T-cell (primary cell): ENCODE measurements at regions of chr2 and their contacts with region 1.

Region 1: DNA sequence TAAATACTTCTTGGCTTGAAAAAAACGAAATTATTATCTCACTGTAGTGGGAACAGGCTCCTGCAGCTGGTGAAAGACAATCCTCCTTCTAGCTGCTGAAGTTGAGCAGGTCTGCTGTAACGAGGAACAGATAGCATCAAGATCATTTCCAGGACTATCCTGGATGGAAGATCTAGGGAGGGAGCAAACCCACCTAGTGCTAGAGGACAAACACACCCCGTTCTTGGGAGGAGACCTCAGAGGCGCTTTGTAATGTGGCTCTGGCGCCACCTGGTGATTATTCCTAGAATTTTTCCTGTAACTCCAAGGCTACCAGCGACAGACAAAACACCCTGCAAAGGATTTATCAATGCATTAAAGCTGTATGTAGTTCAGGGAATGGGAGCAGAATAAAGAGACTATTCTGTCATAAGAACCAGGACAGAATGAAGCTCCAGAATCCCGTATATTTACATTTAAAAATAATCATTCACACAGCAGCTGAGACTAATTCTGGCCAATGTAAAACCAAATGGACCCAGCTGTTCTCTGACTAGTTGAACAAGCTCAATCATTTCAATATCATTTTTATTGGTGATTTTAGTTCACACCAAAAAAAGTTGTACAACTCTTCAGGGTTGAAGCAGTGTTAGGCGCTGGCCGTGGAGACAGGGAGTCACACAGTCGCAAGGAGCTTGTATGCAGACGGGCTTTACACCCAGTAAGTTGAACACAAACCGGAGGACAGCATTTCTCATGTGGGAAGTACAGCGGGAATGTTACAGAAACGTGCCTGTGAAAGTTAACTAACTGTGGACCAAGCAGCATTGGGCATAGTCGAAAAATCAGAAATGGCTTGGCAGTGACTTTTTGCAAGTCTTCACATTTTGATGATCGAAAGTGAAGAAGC is 290.3 kb downstream of the TRIB2 start:
- DNase-seq: peak; percentile 14 to 81 (median 48)
- ATAC-seq: peak; percentile 65 to 77 (median 73)
- H3K4me3 ChIP-seq: no peak overlapping the region
- H3K4me3 Mint-ChIP-seq: no peak overlapping the region
- H3K27ac ChIP-seq: no peak overlapping the region
- H3K27ac Mint-ChIP-seq: no peak overlapping the region
- H3K4me1 ChIP-seq: peaks cover 0 to 4% of the 10 kb centered on the region in 2 experiments
- H3K4me1 Mint-ChIP-seq: peaks cover 3 to 5% (median 3%) of the 10 kb centered on the region in 3 donors
- H3K27me3 ChIP-seq: peaks cover 0 to 4% of the 10 kb centered on the region in 2 experiments
- H3K27me3 Mint-ChIP-seq: peaks cover 7 to 15% of the 10 kb centered on the region in 2 donors

Region 2: GRCh38 chr2:11829947-11830707 is 1176.9 kb before region 1 on chr2:
- CTCF ChIA-PET with region 1: interaction called, 8 to 20 read pairs
- POLR2A ChIA-PET with region 1: no interaction called
- DNase-seq: peak in 33 of 35 experiments; percentile 4 to 71 (median 25)
- ATAC-seq: peak; percentile 74 to 88 (median 84)
- H3K4me3 ChIP-seq: peak overlapping the region; percentile 7 to 27
- H3K4me3 Mint-ChIP-seq: peak overlapping the region; percentile 74 to 80 (median 76)
- H3K27ac ChIP-seq: no peak overlapping the region
- H3K27ac Mint-ChIP-seq: peak overlapping the region; percentile 84 to 85
- H3K4me1 ChIP-seq: peaks cover 14 to 29% of the 10 kb centered on the region in 2 experiments
- H3K4me1 Mint-ChIP-seq: peaks cover 39 to 57% (median 47%) of the 10 kb centered on the region in 3 donors
- H3K27me3 ChIP-seq: peaks cover 0 to 6% of the 10 kb centered on the region in 2 experiments
- H3K27me3 Mint-ChIP-seq: no peaks in the 10 kb centered on the region

Region 3: DNA sequence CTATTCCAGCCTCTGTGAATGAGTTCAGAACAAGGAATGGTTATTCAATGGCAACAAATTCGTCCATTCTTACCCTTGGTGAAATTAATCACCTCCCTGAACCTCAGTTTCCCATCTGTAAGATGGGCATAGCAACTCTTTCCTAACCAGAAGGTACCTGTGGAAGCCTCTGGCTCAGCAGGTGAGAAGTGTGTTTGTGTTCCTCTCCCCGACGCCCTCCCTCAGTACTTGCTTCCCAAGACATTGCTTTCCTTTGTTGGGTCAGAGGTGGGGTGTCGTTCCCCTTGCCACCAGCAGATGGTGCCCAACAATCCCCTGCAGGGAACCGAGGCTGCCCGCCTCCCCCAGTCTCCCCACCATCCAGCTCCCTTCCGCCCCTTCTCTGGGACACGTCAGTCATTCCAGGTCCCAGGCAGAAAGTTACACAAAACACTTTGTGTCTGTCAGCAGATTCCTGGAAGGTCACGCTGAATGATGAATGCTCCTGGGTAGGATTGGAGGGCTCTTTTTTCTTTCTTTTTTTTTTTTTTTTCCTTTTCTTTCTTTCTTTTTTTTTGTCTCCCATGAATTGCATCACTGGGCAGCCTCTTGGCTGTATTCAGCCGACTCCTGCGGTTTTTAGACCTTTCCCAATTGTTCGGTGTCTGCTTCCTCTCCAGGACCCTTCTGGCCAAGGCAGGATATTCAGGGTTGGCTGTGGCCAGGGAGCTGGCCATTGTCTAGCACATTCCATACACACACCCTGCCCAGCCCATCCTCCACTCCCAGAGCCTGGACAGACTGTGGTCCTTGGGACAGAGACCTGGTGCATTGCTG is 1143.4 kb before region 1 on chr2:
- CTCF ChIA-PET with region 1: interaction called, 6 to 11 read pairs
- POLR2A ChIA-PET with region 1: no interaction called
- DNase-seq: peak; percentile 34 to 82 (median 57)
- ATAC-seq: peak; percentile 73 to 87 (median 82)
- H3K4me3 ChIP-seq: peak overlapping the region in 1 of 2 donors; percentile 18
- H3K4me3 Mint-ChIP-seq: peak overlapping the region in 2 of 3 donors; percentile 29 to 52
- H3K27ac ChIP-seq: no peak overlapping the region
- H3K27ac Mint-ChIP-seq: peak overlapping the region in 1 of 2 donors; percentile 19
- H3K4me1 ChIP-seq: peaks cover 0 to 17% of the 10 kb centered on the region in 2 experiments
- H3K4me1 Mint-ChIP-seq: peaks cover 14 to 36% (median 21%) of the 10 kb centered on the region in 3 donors
- H3K27me3 ChIP-seq: peaks cover 0 to 3% of the 10 kb centered on the region in 2 experiments
- H3K27me3 Mint-ChIP-seq: no peaks in the 10 kb centered on the region

Region 4: GRCh38 chr2:12716282-12717190 is 290.5 kb before region 1 on chr2 and contains the start of gene TRIB2:
- CTCF ChIA-PET with region 1: interaction called in 1 of 2 experiments, 11 read pairs
- POLR2A ChIA-PET with region 1: no interaction called
- DNase-seq: peak; percentile 84 to 95 (median 91)
- ATAC-seq: peak; percentile 82 to 87 (median 84)
- H3K4me3 ChIP-seq: peak within 1 kb of the TSS; percentile 95 to 99
- H3K4me3 Mint-ChIP-seq: peak within 1 kb of the TSS; percentile 95 to 99 (median 98)
- H3K27ac ChIP-seq: peak within 1 kb of the TSS; percentile 88
- H3K27ac Mint-ChIP-seq: peak within 1 kb of the TSS; percentile 98
- H3K4me1 ChIP-seq: peaks cover 25 to 26% of the 10 kb centered on the region in 2 experiments
- H3K4me1 Mint-ChIP-seq: peaks cover 59 to 64% (median 60%) of the 10 kb centered on the region in 3 donors
- H3K27me3 ChIP-seq: no peaks in the 10 kb centered on the region
- H3K27me3 Mint-ChIP-seq: no peaks in the 10 kb centered on the region
- total RNA-seq, gene TRIB2: 111 to 131 (median 121) TPM

Region 5: DNA sequence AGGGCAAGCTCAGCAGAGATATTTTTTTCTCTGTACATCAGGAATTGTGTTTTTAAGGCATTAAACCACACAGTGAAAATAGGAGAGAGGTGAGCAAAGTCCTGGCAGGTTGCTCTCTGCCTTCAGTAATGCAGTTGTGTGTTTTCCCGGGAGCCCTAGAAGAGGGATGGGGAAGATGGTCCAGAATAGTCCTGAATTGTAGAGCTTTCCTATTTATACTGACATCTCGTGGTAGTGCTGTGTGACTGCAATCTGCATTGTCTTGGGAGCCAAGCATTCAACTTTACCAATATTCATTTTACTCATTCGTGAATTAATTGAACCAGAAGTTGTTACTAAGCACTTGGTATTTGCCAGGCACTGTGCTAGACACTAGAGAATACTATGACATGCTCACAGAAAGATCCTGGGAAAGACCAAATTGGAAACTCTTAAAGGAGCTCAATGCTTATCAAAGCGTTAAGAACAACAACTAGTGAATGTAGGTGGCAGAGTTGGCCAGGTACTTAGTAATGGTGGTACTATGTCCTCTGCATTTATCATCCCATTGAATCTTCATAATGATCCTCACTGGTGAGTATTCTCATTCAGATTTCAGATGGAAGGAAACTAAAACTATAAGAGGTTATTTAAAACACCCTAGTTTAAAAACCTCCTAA is 75.8 kb before region 1 on chr2:
- CTCF ChIA-PET with region 1: interaction called, 3 to 15 read pairs
- POLR2A ChIA-PET with region 1: no interaction called
- DNase-seq: peak in 5 of 35 experiments; percentile 0 to 45 (median 3)
- ATAC-seq: peak; percentile 43 to 67 (median 56)
- H3K4me3 ChIP-seq: no peak overlapping the region
- H3K4me3 Mint-ChIP-seq: no peak overlapping the region
- H3K27ac ChIP-seq: no peak overlapping the region
- H3K27ac Mint-ChIP-seq: no peak overlapping the region
- H3K4me1 ChIP-seq: peaks cover 3 to 5% of the 10 kb centered on the region in 2 experiments
- H3K4me1 Mint-ChIP-seq: peaks cover 7 to 15% (median 13%) of the 10 kb centered on the region in 3 donors
- H3K27me3 ChIP-seq: no peaks in the 10 kb centered on the region
- H3K27me3 Mint-ChIP-seq: peaks cover 0 to 8% of the 10 kb centered on the region in 2 donors